Aorta (tissue), 5 donors: ENCODE measurements at regions of chr1 and their contacts with region 1.

Region 1: DNA sequence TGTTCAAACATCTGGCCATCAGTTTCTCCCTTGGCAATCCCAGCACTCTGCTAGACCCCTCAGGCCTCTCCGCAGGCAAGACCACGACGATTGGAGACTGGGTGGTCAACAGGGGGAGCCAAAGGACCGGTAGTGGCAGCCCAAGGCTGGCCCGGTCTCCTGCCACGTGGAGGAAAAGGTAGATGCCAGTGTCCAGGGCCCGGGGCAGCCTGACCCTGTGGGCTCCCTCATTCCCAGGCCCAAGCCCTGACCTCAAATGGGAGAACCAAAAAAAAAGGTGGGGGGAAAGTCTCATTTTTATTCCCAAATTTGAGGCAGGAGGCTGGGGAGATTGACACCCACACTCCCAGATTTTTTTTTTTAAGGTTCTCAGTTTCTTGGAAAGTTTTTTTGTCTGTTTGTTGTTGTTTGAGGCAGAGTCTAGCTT is 24.8 kb downstream of the S100A6 start:
- DNase-seq: peak; percentile 89 to 93
- ATAC-seq: peak; percentile 74
- H3K4me3 ChIP-seq: no peak overlapping the region
- H3K27ac ChIP-seq: no peak overlapping the region
- H3K4me1 ChIP-seq: peaks cover 0 to 3% of the 10 kb centered on the region in 2 donors
- H3K27me3 ChIP-seq: no peaks in the 10 kb centered on the region

Region 2: DNA sequence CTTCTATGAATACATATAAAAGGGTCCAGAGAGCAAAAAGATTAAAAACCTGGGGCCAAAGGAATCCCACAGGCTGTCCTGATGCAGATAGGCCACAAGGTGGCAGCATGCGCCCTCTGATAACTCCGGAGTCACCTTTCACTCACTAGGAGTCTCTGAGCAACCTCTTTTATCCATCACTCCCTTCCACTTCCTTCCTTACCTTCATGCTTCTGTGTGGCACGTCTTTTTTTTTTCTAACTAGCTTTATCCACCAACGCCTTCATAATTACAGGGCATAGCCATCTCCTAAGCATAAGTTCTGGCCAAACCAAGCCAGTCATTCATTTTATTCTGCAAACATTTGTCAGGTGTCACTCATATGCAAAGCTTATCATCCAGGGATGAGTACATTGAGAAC is 158.5 kb before region 1 on chr1:
- intact Hi-C with region 1: loop called in 1 of 2 experiments (anchors 5 kb)
- DNase-seq: peak; percentile 79 to 85
- ATAC-seq: peak; percentile 83
- H3K4me3 ChIP-seq: no peak overlapping the region
- H3K27ac ChIP-seq: no peak overlapping the region
- H3K4me1 ChIP-seq: no peaks in the 10 kb centered on the region
- H3K27me3 ChIP-seq: no peaks in the 10 kb centered on the region

Region 3: DNA sequence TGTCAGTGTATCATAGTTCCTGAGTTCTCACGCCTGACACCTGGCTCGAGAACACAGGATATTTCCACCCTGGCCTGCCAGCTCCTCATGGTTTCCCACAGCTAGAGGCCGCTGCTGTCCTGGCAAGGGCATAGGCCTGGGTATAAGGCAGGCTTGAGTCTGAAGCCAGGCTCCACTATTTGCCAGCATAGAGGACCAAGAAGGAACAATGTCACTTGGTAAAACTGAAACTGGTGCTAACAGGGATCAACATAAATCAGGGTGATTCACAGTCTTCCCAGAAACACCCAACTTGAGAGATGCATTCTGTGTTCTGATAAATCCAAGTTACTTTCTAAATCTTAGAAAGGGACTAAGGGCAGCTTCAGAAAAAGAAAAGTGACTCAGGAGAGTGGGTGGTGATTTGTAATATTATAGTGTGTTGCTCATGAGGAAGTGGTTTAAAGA is 61.6 kb after region 1 on chr1:
- intact Hi-C with region 1: loop called (anchors 1 kb)
- DNase-seq: peak; percentile 89 to 90
- ATAC-seq: peak; percentile 91
- H3K4me3 ChIP-seq: no peak overlapping the region
- H3K27ac ChIP-seq: peak overlapping the region in 1 of 2 donors; percentile 52
- H3K4me1 ChIP-seq: no peaks in the 10 kb centered on the region
- H3K27me3 ChIP-seq: no peaks in the 10 kb centered on the region

Region 4: DNA sequence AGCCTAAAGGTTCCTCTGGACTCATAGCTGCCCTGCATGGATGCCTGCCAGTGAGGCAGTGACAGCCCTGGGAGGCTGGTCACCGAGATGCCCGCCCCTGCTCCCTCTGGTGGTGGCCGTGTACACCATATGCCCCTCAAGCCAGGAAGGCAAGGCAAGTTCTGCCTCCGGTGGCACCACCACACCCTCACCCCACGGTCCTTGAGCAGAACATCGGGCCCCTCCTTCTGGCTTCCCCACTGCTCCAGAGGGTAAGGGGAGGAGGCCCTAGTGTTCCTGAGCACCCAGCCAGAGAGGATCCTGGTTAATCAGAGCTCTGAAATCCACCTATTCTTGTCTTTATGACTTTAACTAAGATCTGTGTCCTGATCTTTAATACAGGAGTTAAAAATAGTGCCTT is 106.7 kb after region 1 on chr1:
- intact Hi-C with region 1: loop called in 1 of 2 experiments (anchors 5 kb)
- DNase-seq: peak; percentile 87 to 93
- ATAC-seq: peak; percentile 74
- H3K4me3 ChIP-seq: no peak overlapping the region
- H3K27ac ChIP-seq: no peak overlapping the region
- H3K4me1 ChIP-seq: peaks cover 0 to 1% of the 10 kb centered on the region in 2 donors
- H3K27me3 ChIP-seq: no peaks in the 10 kb centered on the region

Region 5: GRCh38 chr1:153626922-153627796 is 116.2 kb after region 1 on chr1 and contains the start of gene S100A13:
- intact Hi-C with region 1: loop called in 1 of 2 experiments (anchors 5 kb)
- DNase-seq: peak; percentile 88 to 90
- ATAC-seq: peak; percentile 80
- H3K4me3 ChIP-seq: peak within 1 kb of the TSS; percentile 32 to 39
- H3K27ac ChIP-seq: peak within 1 kb of the TSS; percentile 64 to 85
- H3K4me1 ChIP-seq: no peaks in the 10 kb centered on the region
- H3K27me3 ChIP-seq: no peaks in the 10 kb centered on the region
- total RNA-seq, gene S100A13: 80.0 to 111 TPM

Region 6: GRCh38 chr1:153775458-153776327 is 264.7 kb after region 1 on chr1:
- intact Hi-C with region 1: loop called in 1 of 2 experiments (anchors 10 kb)
- DNase-seq: peak; percentile 82 to 90
- ATAC-seq: peak; percentile 53
- H3K4me3 ChIP-seq: peak overlapping the region; percentile 47 to 50
- H3K27ac ChIP-seq: peak overlapping the region; percentile 54 to 82
- H3K4me1 ChIP-seq: no peaks in the 10 kb centered on the region
- H3K27me3 ChIP-seq: no peaks in the 10 kb centered on the region